HAP-1 (cell line): ENCODE measurements at regions of chr18 and their contacts with region 1.

Region 1: DNA sequence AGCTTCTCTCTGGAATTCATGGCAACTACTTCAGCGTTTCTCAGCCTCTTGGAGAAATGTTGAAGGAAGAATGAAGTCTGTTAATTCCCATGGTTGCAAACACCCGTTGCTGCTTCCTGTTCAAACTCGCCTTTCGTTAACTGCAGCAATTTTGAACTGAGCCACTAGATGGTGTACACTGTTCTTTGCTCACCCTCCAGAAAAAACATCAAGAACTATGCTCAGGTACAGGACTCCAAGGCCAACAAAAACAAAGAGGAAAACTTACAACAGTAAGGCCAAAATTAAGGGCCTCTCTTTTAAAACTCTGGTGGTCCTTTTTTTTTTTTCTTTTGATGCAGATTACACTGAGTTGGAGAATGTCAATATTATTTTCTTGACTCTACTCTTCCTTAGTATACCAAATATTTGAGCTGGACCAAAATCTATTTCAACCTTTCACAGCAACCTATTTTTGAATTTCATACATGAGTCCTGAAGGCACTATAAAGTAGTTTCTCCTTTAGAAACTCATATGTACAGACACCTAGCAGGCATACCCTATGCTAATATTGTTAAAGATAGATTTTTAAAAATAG is 58.2 kb downstream of the KLHL14 start:
- DNase-seq: peak; percentile 61 to 66
- H3K4me3 ChIP-seq: no peak overlapping the region
- H3K4me1 ChIP-seq: no peaks in the 10 kb centered on the region
- H3K27me3 ChIP-seq: peaks cover 5% of the 10 kb centered on the region; the same call in 1 of the 2 replicates

Region 2: GRCh38 chr18:32576296-32576916 is 138.3 kb before region 1 on chr18:
- in situ Hi-C with region 1: no loop called
- DNase-seq: peak; percentile 33 to 41
- H3K4me3 ChIP-seq: no peak overlapping the region
- H3K4me1 ChIP-seq: no peaks in the 10 kb centered on the region
- H3K27me3 ChIP-seq: peaks cover 2% of the 10 kb centered on the region; the same call in 1 of the 2 replicates

Region 3: DNA sequence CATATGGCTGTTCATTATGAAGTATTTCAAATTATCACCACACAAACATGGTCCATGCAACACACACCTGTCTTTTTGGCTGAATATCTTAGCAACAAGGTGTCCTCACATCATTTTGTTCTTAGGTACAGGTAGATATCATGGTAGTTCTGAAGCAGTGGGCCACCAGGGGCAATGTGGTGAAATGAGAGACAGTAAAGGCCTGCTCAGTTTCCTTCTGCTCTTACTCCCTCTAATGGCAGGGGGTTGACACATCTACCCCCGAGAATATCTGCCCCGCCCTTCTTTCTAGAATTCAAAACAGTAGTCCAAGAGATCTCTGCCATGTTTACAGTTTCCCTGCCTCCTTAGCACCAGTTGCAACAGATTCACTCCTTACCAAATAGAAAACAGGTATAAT is 205.1 kb after region 1 on chr18:
- in situ Hi-C with region 1: loop called (anchors 25 kb)
- DNase-seq: peak; percentile 65 to 69
- H3K4me3 ChIP-seq: no peak overlapping the region
- H3K4me1 ChIP-seq: no peaks in the 10 kb centered on the region
- H3K27me3 ChIP-seq: peaks cover 11% of the 10 kb centered on the region; the same call in 1 of the 2 replicates